MCF 10A (cell line): ENCODE measurements at regions of chr20 and their contacts with region 1.

Region 1: DNA sequence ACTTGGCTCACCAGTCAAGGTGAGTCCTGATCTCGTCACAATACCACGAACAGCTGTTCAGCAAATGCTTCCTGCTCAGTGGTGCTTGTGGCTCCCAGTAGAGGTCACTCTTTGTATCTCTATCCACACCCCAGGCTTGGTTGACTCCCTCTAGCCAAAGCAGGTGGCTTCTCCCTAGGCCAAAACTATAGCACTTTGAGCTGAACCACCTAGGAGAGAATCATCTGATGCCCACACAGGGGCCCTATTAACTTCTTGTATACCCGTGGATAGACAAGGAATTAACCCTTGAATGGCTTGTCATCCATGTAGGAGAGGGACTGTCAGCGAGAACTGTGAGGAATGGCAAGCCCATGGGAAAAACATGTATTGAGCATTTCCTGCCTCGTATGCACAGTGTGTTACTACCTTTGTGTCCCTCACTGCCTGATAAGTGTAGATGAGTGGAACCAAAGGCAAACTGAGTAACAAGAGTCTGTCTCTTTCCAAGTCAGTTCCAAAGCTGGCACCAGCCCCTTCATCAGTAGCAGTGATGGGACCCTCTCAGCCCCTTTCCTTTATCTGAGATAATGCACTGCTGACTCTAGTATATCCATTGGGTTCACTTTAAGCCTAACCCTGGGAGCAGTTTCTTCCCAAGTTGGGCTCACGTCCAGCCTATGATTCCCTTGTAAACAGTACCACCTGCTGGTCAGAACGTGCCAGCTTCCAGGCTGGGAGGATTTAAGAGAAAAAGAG is 42.5 kb downstream of the EIF2S2 start:
- DNase-seq: peak; percentile 85
- H3K4me3 Mint-ChIP-seq: no peak overlapping the region
- H3K27ac Mint-ChIP-seq: no peak overlapping the region
- H3K4me1 Mint-ChIP-seq: peaks cover 21% of the 10 kb centered on the region
- H3K27me3 Mint-ChIP-seq: no peaks in the 10 kb centered on the region
- CTCF ChIP-seq: peak; percentile 88

Region 2: DNA sequence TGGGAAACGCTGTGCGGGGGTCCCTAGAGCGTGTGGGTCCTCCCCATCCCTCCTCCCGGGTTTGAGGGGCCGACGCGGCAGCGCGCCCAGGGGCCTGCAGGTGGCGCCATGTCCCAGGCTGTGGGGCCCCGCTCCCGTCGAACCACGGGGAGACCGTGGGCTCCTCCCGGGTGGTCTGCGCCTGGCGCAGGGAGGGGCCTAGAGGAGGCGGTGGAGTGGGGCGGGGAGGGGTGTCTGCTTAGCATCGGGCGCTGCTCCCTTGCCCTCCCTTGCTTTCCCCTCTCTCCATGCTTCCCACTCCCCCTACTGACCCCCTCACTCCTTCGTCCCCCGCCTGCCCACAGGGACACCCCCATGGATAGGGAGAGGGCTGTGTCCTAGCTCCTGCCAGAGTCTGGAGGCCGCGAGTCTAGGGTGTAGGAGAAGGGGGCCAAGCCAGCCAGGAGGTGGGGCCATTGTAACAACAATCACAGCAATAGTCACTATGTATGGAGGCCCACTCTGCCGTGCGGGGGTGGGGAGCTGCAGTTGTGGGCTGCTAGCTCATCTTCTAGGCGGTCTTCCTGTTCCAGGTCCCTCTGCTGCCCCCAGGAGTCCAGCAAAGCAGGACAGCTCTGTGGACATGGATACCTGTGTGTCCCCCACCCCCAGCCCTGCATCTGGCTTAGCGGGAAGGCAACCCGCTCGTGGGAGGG is 206.7 kb before region 1 on chr20:
- CTCF ChIA-PET with region 1: interaction called, 31 read pairs
- POLR2A ChIA-PET with region 1: interaction called, 3 read pairs
- intact Hi-C with region 1: loop called (anchors 1 kb)
- DNase-seq: peak; percentile 33
- H3K4me3 Mint-ChIP-seq: no peak overlapping the region
- H3K27ac Mint-ChIP-seq: no peak overlapping the region
- H3K4me1 Mint-ChIP-seq: no peaks in the 10 kb centered on the region
- H3K27me3 Mint-ChIP-seq: peaks cover 20% of the 10 kb centered on the region
- CTCF ChIP-seq: peak; percentile 42

Region 3: DNA sequence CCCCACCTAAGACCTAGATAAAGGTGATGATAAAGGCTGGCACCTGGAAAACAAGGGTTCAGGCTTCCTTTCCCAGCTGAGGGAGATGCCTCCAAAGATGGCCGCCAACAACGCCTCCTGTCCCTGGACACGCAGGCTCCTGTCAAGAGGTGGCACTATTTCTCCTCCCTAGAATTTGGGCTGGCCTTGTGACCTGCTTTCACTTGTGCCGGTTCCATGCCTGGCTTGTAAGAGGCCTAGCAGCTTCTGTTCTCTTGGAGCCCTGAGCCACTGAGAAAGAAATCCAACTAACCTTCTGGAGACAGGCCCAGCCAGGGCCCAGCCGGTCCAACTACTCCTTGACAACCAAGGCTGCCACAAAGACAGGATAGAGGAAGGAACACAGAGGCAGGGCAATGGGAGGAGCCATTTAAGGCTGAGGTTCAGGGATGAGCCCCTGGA is 136.0 kb before region 1 on chr20:
- CTCF ChIA-PET with region 1: interaction called, 7 read pairs
- POLR2A ChIA-PET with region 1: interaction called, 3 read pairs
- intact Hi-C with region 1: loop called (anchors 1 kb)
- DNase-seq: peak; percentile 79
- H3K4me3 Mint-ChIP-seq: no peak overlapping the region
- H3K27ac Mint-ChIP-seq: no peak overlapping the region
- H3K4me1 Mint-ChIP-seq: peaks cover 5% of the 10 kb centered on the region
- H3K27me3 Mint-ChIP-seq: peaks cover 16% of the 10 kb centered on the region
- CTCF ChIP-seq: peak; percentile 64

Region 4: DNA sequence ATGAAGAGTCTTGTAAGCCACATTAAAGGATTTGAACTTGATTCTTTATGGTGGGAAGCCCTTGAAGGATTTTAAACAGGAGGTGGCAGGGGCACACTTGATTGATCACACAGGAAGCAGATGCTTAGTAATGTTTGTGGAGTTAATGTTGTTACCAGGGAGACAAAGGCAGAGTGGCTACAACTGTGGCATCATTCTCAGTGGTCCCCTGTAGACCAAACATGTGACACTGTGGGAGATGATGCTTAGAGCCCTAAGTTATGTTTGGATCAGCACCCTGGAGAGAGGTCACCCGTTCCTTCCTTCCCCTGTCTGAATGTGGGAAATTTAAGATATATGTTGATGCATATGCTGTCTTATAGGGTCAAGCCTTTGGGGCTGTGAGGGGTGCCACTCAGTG is 10.7 kb before region 1 on chr20:
- CTCF ChIA-PET with region 1: interaction called, 11 read pairs
- POLR2A ChIA-PET with region 1: interaction called, 6 read pairs
- intact Hi-C with region 1: no loop called
- DNase-seq: no peak
- H3K4me3 Mint-ChIP-seq: no peak overlapping the region
- H3K27ac Mint-ChIP-seq: no peak overlapping the region
- H3K4me1 Mint-ChIP-seq: peaks cover 10% of the 10 kb centered on the region
- H3K27me3 Mint-ChIP-seq: no peaks in the 10 kb centered on the region
- CTCF ChIP-seq: no peak

Region 5: GRCh38 chr20:34129518-34130162 is 60.1 kb after region 1 on chr20:
- CTCF ChIA-PET with region 1: interaction called, 7 read pairs
- POLR2A ChIA-PET with region 1: no interaction called
- intact Hi-C with region 1: loop called (anchors 1 kb)
- DNase-seq: peak; percentile 79
- H3K4me3 Mint-ChIP-seq: peak overlapping the region; percentile 17
- H3K27ac Mint-ChIP-seq: no peak overlapping the region
- H3K4me1 Mint-ChIP-seq: no peaks in the 10 kb centered on the region
- H3K27me3 Mint-ChIP-seq: peaks cover 23% of the 10 kb centered on the region
- CTCF ChIP-seq: peak; percentile 73

Region 6: DNA sequence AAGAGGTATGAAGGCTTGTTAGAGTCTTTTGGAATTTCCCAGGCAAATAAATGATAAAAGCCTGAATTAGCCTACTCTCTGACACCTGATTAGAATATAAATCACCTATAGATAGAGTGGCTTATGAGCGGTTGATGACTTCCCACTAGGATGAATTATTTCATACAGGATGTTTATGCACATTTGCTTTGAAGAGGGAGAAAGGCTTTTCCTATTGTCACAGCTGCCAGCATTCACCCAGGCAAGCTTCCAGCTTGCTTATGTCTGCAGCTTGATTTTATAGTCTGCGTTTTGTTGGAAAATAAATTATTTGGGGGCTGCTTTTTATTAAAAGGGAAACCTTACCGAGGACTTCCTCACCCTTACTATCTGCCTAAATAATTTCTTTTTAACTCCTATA is 93.8 kb after region 1 on chr20:
- CTCF ChIA-PET with region 1: no interaction called
- POLR2A ChIA-PET with region 1: no interaction called
- intact Hi-C with region 1: no loop called
- DNase-seq: no peak
- H3K4me3 Mint-ChIP-seq: no peak overlapping the region
- H3K27ac Mint-ChIP-seq: no peak overlapping the region
- H3K4me1 Mint-ChIP-seq: no peaks in the 10 kb centered on the region
- H3K27me3 Mint-ChIP-seq: no peaks in the 10 kb centered on the region
- CTCF ChIP-seq: no peak

Region 7: GRCh38 chr20:34249291-34249690 is 179.8 kb after region 1 on chr20:
- CTCF ChIA-PET with region 1: no interaction called
- POLR2A ChIA-PET with region 1: no interaction called
- intact Hi-C with region 1: no loop called
- DNase-seq: peak; percentile 37
- H3K4me3 Mint-ChIP-seq: no peak overlapping the region
- H3K27ac Mint-ChIP-seq: no peak overlapping the region
- H3K4me1 Mint-ChIP-seq: peaks cover 5% of the 10 kb centered on the region
- H3K27me3 Mint-ChIP-seq: no peaks in the 10 kb centered on the region
- CTCF ChIP-seq: no peak